ENCODE measurements at regions of chr12 and their contacts with region 1.

Region 1: DNA sequence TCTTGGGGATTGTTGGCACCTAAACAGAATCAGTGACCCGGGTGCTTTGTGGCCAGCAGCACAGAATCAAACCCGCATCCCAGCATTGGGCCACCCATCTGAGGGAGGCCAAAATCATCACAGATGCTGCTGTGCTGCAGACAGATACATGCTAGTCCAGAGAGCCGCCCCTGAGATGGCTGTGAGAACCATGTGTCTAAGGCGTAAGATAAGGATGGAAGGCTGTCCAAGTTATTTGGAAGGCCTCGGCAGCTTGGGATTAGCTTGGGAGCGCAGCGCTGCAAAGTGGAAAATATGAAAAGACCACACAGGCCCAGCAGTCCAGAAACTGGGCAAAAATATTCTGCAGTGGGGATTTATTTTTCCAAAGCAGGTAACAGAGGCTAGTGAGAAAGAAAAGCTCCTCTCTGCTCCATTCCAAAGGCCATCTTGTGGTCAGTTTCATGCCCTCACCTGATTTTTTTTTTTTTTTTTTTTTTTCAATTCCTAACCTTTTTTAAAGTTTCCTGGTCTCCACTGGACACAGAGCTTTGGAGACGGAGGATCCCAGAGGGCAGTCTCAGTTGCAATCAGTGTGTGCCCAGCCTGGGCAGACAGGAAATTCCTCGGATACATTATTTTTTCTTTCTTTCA is 178.9 kb upstream of the BCL2L14 start:
- DNase-seq: no peak
- H3K4me3 ChIP-seq: no peak overlapping the region
- H3K27ac ChIP-seq: 0 out of 2 replicates have a peak overlapping the region, but pooled peaks have one; percentile 4
- H3K4me1 ChIP-seq: peaks cover 4% of the 10 kb centered on the region
- H3K27me3 ChIP-seq: no peaks in the 10 kb centered on the region
- CTCF ChIP-seq: peak; percentile 46; the same call in 1 of the 2 replicates

Region 2: GRCh38 chr12:11748903-11749302 is 143.0 kb before region 1 on chr12:
- CTCF ChIA-PET with region 1: interaction called, 14 read pairs
- POLR2A ChIA-PET with region 1: no interaction called
- intact Hi-C with region 1: no loop called
- DNase-seq: no peak
- H3K4me3 ChIP-seq: no peak overlapping the region
- H3K27ac ChIP-seq: no peak overlapping the region
- H3K4me1 ChIP-seq: peaks cover 17% of the 10 kb centered on the region
- H3K27me3 ChIP-seq: no peaks in the 10 kb centered on the region
- CTCF ChIP-seq: no peak

Region 3: GRCh38 chr12:11836282-11837151 is 55.4 kb before region 1 on chr12:
- CTCF ChIA-PET with region 1: no interaction called
- POLR2A ChIA-PET with region 1: interaction called, 13 read pairs
- intact Hi-C with region 1: no loop called
- DNase-seq: no peak
- H3K4me3 ChIP-seq: no peak overlapping the region
- H3K27ac ChIP-seq: no peak overlapping the region
- H3K4me1 ChIP-seq: peaks cover 28% of the 10 kb centered on the region
- H3K27me3 ChIP-seq: no peaks in the 10 kb centered on the region
- CTCF ChIP-seq: no peak

Measured in PC-9 (cell line).